Cardiac septum (tissue), 1 donor: ENCODE measurements at regions of chr12 and their contacts with region 1.

Region 1: DNA sequence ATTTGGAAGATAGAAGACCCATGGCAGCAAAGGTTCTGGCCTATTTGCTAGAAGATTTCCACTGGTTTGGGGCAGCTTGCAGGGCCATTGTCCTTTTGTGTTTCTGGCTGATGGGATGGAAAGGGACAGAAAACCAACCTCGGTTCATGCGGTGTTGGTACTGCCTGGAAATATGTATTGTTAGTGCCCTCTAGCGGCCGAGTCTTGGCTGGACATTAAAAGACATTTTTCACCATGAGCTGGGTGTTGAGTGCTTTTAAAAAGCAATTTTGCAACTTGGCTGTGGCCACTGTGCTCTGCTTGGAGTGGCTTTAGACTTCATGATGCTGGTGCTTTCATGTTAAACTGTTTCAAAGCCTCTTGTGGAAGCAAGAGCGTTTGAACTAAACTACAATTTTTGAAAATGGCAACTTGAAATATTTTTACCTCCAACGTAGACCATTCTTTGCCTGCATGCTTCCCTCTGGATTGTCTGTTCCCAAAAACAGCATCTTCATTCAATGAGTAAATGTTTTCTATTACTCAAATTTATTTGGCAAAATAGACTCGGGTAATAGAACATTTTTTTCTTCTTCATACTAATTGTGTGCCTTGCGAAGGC is 102.7 kb upstream of the TBX5 start:
- DNase-seq: no peak

Region 2: GRCh38 chr12:113980537-113981337 is 527.9 kb before region 1 on chr12:
- intact Hi-C with region 1: loop called (anchors 2 kb)
- DNase-seq: no peak

Region 3: DNA sequence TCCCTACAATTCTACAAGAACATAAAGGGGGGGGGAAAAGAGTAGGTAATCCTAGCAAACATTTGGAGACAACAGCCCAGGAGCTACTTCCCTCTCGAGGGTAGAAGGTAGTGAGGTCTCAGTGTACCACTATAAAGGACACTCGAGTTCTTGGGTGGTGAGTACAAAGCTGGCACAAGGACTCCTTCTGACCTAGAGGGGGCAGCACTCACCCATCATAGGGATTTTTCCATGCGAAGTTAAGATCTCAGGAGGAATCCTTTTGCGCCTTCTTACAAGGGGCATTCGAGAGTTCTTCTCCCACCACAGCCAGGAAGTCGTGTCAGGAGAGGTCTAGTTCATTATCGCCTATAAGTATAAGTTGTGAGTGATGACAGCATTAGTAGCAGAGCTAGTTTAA is 342.3 kb before region 1 on chr12:
- intact Hi-C with region 1: loop called (anchors 2 kb)
- DNase-seq: no peak